Posterior vena cava (tissue), 2 donors: ENCODE measurements at regions of chr1 and their contacts with region 1.

Region 1: GRCh38 chr1:119662034-119662437 is 14.0 kb upstream of the ZNF697 start:
- DNase-seq: no peak

Region 2: GRCh38 chr1:119549719-119550132 is 112.3 kb before region 1 on chr1:
- intact Hi-C with region 1: no loop called
- DNase-seq: no peak

Region 3: GRCh38 chr1:119613769-119614720 is 48.0 kb before region 1 on chr1:
- intact Hi-C with region 1: loop called in 1 of 2 experiments (anchors 5 kb)
- DNase-seq: peak; percentile 93

Region 4: DNA sequence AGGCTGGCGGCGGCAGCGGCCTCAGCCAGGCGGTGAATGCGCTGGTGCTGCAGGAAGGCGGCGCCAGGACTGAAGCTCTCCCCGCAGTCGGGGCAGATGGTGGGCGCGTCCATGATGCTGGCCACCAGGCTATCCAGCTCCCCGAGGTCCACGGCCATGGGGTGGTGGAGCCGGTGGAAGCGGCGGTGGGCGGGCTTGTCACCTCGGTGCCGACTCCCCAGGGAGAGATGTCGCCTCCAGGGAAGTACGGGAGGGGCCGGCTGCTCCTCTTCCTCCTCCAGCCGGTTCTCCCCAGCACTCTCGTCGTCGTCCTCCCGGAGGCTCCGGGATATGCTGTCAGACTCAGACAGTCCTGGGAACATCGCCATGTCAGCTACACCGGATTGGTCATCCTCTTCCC is 38.4 kb before region 1 on chr1:
- intact Hi-C with region 1: loop called in 1 of 2 experiments (anchors 5 kb)
- DNase-seq: no peak